AG04450 (cell line): ENCODE measurements at regions of chr3 and their contacts with region 1.

Region 1: DNA sequence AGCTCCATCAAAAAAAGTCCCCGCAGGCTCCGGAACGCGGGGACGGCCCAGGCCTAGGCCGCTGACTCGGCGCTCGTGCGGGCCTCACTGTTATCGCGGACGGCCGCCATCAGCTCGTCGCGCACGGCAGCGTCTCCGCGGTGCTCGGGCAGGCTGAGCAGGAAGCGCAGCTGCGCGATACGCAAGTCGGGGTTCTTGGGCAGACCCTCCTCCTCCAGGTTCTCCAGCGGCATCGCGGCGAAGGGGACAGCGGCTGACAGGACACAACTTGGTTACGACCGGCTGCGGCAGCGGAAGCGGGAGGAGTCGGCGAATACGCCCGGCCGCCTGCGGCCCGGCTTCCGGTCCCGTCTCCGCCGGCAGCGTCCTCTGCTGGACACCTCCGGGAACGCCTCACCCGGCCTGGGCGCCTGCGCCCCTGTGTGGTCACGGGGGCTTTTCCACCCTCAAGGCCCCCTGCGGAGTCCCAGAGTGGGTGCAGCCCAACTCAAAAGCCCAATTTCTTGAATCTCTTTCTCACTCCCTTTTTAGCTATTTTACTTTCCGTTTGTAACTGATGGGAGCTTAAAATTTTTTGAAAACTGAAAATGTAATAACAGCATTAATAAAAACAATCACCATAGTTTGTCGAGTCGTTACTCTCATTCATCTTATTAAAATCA is at the start of gene PSMD6:
- DNase-seq: peak; percentile 57
- H3K4me3 ChIP-seq: peak within 1 kb of the TSS; percentile 95
- H3K27ac ChIP-seq: peak within 1 kb of the TSS; percentile 63
- H3K27me3 ChIP-seq: no peaks in the 10 kb centered on the region
- CTCF ChIP-seq: peak; percentile 100
- polyA plus RNA-seq, gene PSMD6: 69.4 and 83.6 TPM in 2 replicates

Region 2: GRCh38 chr3:64011685-64012084 is 11.6 kb before region 1 on chr3:
- CTCF ChIA-PET with region 1: interaction called, 19 read pairs
- POLR2A ChIA-PET with region 1: no interaction called
- DNase-seq: no peak
- H3K4me3 ChIP-seq: no peak overlapping the region
- H3K27ac ChIP-seq: no peak overlapping the region
- H3K27me3 ChIP-seq: no peaks in the 10 kb centered on the region
- CTCF ChIP-seq: no peak

Region 3: GRCh38 chr3:64111868-64112267 is 88.5 kb after region 1 on chr3:
- CTCF ChIA-PET with region 1: interaction called, 12 read pairs
- POLR2A ChIA-PET with region 1: no interaction called
- DNase-seq: no peak
- H3K4me3 ChIP-seq: no peak overlapping the region
- H3K27ac ChIP-seq: no peak overlapping the region
- H3K27me3 ChIP-seq: no peaks in the 10 kb centered on the region
- CTCF ChIP-seq: no peak

Region 4: GRCh38 chr3:64224826-64225610 is 201.7 kb after region 1 on chr3 and contains the start of gene PRICKLE2:
- CTCF ChIA-PET with region 1: interaction called, 19 read pairs
- POLR2A ChIA-PET with region 1: no interaction called
- DNase-seq: peak; percentile 60
- H3K4me3 ChIP-seq: peak within 1 kb of the TSS; percentile 56
- H3K27ac ChIP-seq: peak within 1 kb of the TSS; percentile 87
- H3K27me3 ChIP-seq: no peaks in the 10 kb centered on the region
- CTCF ChIP-seq: no peak
- polyA plus RNA-seq, gene PRICKLE2: 14.2 and 14.7 TPM in 2 replicates

Region 5: DNA sequence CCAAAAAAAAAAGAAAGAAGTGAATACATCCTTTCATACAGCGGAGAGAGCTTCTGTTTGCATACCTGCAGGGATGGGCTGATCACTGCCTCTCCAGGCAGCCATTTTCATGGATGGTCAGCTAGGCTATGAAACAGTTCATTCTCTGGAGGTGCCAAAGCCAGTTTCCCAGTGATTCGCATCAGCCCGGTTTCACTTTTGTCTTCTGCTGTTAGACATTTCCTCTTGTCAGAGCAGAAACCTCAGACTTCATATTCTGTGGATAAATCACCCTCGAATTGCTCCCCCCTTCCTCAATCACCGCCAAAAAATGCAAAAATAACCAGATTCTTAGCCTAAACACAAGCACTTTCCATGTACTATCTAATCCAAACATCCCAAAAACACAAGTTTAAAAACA is 438.9 kb after region 1 on chr3:
- CTCF ChIA-PET with region 1: interaction called, 16 read pairs
- POLR2A ChIA-PET with region 1: no interaction called
- DNase-seq: peak; percentile 68
- H3K4me3 ChIP-seq: peak overlapping the region; percentile 45
- H3K27ac ChIP-seq: peak overlapping the region; percentile 80
- H3K27me3 ChIP-seq: no peaks in the 10 kb centered on the region
- CTCF ChIP-seq: no peak

Region 6: DNA sequence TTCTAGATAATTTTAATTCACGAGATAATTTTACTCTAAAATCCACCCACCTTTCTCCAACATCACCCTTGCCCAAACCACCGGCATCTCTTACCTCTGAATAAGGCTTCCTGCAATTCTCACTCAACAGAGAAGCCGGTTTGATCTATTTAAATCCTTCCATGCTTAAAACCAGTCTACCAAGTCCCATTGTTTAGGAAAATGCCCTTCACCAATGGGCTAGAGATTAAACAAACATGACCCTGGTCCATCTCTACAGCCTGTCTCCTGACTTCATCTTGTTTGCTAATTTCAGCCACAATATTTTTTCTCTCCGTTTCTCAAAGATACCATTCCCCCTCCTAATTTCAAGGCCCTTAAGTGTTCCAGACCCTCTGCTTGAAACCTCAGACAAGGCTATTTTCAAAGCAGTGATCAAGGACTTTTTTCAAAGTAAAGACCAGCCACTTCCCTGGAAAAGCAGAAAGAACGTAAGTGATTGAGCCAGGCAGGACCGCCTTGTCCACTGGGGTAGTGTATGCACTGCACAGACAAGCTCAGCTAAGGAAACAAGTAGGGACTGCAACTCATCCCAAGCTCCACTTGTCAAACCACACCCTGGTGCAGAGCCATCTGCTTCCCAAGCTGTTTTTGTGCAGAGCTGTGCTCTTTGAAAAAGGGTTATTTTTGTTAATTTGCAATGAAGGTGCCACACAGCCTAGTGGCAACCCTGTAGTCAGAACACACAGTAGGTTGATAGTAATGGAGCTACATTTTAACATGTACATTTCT is 471.0 kb after region 1 on chr3:
- CTCF ChIA-PET with region 1: interaction called, 11 read pairs
- POLR2A ChIA-PET with region 1: no interaction called
- DNase-seq: no peak
- H3K4me3 ChIP-seq: no peak overlapping the region
- H3K27ac ChIP-seq: no peak overlapping the region
- H3K27me3 ChIP-seq: peaks cover 2% of the 10 kb centered on the region
- CTCF ChIP-seq: no peak